H1 (cell line): ENCODE measurements at regions of chr4 and their contacts with region 1.

Region 1: DNA sequence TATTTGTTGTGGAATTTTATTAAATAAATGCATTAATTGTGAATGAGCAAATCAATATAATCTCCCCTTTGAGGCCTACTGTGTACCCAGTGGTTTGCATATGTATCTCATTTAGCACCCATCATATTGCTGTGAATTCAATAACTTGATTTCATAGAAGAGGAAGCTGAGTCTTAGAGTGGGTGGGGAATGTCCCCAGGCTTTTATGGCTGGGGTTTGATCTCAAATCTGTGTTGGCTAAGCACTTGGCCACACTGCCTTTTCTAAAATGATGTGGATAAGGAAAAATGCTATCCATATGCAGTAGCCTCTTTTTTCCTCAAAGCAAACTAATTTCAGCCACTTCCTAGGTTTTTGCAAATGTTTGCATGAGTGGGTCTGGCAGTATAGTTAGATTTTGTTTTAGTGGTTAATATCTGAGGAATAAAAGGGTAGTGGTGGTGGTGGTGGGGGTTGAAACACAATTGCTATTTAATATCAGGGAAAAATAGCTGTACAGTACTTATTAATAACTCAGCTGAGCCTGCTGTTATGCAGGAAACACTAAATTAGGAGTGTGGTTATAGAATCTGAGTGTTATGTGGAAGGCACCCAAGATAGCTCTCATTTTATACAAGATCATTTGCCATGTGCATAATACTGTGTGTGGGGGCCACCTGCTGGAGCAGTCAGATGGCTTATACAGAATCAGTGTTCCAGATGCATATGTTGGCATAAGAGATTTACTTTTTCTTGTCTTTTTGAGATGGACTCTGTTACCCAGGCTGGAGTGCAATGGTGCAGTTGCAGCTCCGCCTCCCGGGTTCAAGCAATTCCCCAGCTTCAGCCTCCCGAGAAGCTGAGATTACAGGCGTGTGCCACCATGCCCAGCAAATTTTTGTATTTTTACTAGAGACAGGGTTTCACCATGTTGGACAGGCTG is 108.0 kb downstream of the TMEM131L start:
- DNase-seq: no peak
- H3K4me3 ChIP-seq: no peak overlapping the region
- H3K27ac ChIP-seq: no peak overlapping the region
- H3K4me1 ChIP-seq: no peaks in the 10 kb centered on the region
- H3K27me3 ChIP-seq: no peaks in the 10 kb centered on the region
- CTCF ChIP-seq: peak in 2 of 3 experiments; percentile 4 to 12; a peak in 2 of 4 replicates
- EP300 ChIP-seq: no peak
- POLR2A ChIP-seq: no peak
- RAD21 ChIP-seq: peak; percentile 45 to 59; a peak in 3 of 4 replicates

Region 2: GRCh38 chr4:153432968-153433753 is 141.0 kb before region 1 on chr4:
- CTCF ChIA-PET with region 1: interaction called, 11 read pairs
- POLR2A ChIA-PET with region 1: no interaction called
- DNase-seq: peak; percentile 19 to 62
- H3K4me3 ChIP-seq: no peak overlapping the region
- H3K27ac ChIP-seq: no peak overlapping the region
- H3K4me1 ChIP-seq: no peaks in the 10 kb centered on the region
- H3K27me3 ChIP-seq: no peaks in the 10 kb centered on the region
- CTCF ChIP-seq: peak; percentile 59 to 84 (median 80)
- EP300 ChIP-seq: no peak
- POLR2A ChIP-seq: no peak
- RAD21 ChIP-seq: peak; percentile 87